Aorta (tissue), 5 donors: ENCODE measurements at regions of chr4 and their contacts with region 1.

Region 1: GRCh38 chr4:123941306-123941705 is 544.7 kb downstream of the SPRY1 start:
- DNase-seq: no peak
- ATAC-seq: no peak
- H3K4me3 ChIP-seq: no peak overlapping the region
- H3K27ac ChIP-seq: no peak overlapping the region
- H3K4me1 ChIP-seq: no peaks in the 10 kb centered on the region
- H3K27me3 ChIP-seq: no peaks in the 10 kb centered on the region

Region 2: DNA sequence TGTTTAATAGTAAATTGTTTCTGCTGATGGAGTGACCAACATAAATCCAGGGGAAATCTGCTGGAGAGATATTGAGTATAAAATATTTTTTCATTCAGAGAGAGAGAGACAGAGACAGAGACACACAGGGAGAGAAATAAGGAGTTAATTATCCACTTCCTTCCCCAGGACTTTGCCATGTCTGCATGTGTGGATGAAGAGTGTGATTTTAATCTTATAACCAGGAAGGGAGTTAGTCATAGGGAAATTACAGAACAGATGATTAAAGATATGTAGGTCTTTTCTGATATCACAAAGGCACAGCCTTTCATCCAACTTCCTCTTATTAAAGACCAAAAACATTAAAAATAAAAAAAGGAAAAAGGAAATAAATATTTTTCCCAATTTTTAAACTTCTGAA is 18.5 kb before region 1 on chr4:
- intact Hi-C with region 1: loop called in 1 of 2 experiments (anchors 1 kb)
- DNase-seq: no peak
- ATAC-seq: no peak
- H3K4me3 ChIP-seq: no peak overlapping the region
- H3K27ac ChIP-seq: no peak overlapping the region
- H3K4me1 ChIP-seq: no peaks in the 10 kb centered on the region
- H3K27me3 ChIP-seq: no peaks in the 10 kb centered on the region